ENCODE measurements at regions of chr6 and their contacts with region 1.

Region 1: DNA sequence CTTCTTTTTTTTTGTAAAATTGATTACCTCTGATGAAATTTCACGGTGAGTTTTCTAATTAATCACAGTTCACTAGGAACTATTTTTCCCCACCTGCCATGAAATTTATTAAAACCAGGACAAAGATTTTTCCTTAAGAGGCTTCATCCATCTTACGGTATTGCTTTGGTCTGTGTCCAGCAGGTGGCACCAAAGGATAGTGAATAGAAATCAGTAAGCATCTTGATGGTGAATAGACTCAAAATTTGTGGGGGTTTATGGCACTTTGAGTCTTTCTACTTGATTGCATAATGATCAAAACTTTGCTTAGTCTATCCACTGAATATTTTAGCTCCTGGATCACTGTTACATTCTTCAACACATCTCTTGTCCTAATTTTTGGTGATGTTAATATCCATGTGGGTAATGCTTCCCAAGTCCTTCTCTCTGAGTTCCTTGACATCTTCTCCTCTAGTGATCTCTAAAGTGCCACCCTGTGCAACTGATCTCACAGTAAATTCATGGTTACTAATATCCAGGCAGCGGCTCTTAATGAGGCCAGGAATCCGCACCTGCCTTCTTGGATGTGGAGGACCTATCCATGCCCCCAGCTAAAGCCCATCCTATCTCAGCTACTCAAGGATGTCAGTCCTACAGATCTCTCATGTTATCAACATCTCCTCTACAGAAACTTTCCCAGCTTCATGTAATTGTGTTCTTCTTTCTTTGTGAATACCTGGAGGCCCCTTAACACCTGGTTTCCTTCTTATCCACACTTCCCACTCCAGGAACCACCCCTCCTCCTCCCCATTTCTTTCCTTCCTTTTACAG is 54.5 kb downstream of the STMND1 start:
- DNase-seq: peak; percentile 70
- ATAC-seq: no peak
- H3K4me3 ChIP-seq: no peak overlapping the region
- H3K4me3 Mint-ChIP-seq: no peak overlapping the region
- H3K27ac ChIP-seq: no peak overlapping the region
- H3K27ac Mint-ChIP-seq: no peak overlapping the region
- H3K4me1 ChIP-seq: no peaks in the 10 kb centered on the region
- H3K4me1 Mint-ChIP-seq: no peaks in the 10 kb centered on the region
- H3K27me3 ChIP-seq: no peaks in the 10 kb centered on the region
- H3K27me3 Mint-ChIP-seq: peaks cover 12% of the 10 kb centered on the region
- CTCF ChIP-seq: peak; percentile 90

Region 2: GRCh38 chr6:17820055-17820454 is 663.7 kb after region 1 on chr6:
- CTCF ChIA-PET with region 1: interaction called, 4 read pairs
- POLR2A ChIA-PET with region 1: no interaction called
- intact Hi-C with region 1: loop called (anchors 1 kb)
- DNase-seq: no peak
- ATAC-seq: no peak
- H3K4me3 ChIP-seq: no peak overlapping the region
- H3K4me3 Mint-ChIP-seq: no peak overlapping the region
- H3K27ac ChIP-seq: no peak overlapping the region
- H3K27ac Mint-ChIP-seq: no peak overlapping the region
- H3K4me1 ChIP-seq: no peaks in the 10 kb centered on the region
- H3K4me1 Mint-ChIP-seq: no peaks in the 10 kb centered on the region
- H3K27me3 ChIP-seq: no peaks in the 10 kb centered on the region
- H3K27me3 Mint-ChIP-seq: no peaks in the 10 kb centered on the region
- CTCF ChIP-seq: no peak

Measured in B cell (primary cell).